GM10248 (cell line): ENCODE measurements at regions of chr16 and their contacts with region 1.

Region 1: GRCh38 chr16:67480833-67481560 is at the start of gene ATP6V0D1:
- DNase-seq: peak; percentile 99
- CTCF ChIP-seq: peak; percentile 90

Region 2: GRCh38 chr16:67461600-67462592 is 19.1 kb before region 1 on chr16:
- CTCF ChIA-PET with region 1: interaction called, 56 read pairs
- POLR2A ChIA-PET with region 1: interaction called, 5 read pairs
- DNase-seq: no peak
- CTCF ChIP-seq: no peak